Activated CD8-positive, alpha-beta T cell treated with anti-CD3 and anti-CD28 coated beads, Interleukin-2, amount 10 ng/mL, durations not matched to agents 7 days and 5 days (primary cell): ENCODE measurements at regions of chr10 and their contacts with region 1.

Region 1: GRCh38 chr10:17643755-17644484 is at the start of gene STAM:
- DNase-seq: peak; percentile 95
- ATAC-seq: peak; percentile 86
- H3K4me3 Mint-ChIP-seq: peak within 1 kb of the TSS; percentile 95
- H3K27ac Mint-ChIP-seq: peak within 1 kb of the TSS; percentile 100
- H3K4me1 Mint-ChIP-seq: peaks cover 54% of the 10 kb centered on the region
- H3K27me3 Mint-ChIP-seq: no peaks in the 10 kb centered on the region
- total RNA-seq, gene STAM: 20.8 to 21.9 TPM

Region 2: DNA sequence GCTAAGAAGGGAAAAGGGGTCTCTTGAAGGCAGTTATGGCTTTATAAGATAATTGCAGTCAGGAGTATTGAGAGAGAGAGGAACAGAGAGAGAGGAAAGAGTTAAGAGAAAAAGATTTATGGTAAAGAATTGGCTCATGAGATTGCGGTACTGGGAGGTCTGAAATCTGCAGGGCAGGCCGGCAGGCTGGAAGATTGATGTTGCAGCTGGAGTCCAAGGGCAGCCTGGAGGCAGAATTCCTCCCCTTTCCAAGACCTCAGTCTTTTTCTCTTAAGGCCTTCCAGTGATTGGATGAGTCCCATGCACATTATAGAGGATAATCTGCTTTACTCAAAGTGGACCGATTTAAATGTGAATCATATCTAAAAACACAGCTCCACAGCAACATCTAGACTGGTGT is 95.2 kb before region 1 on chr10:
- CTCF ChIA-PET with region 1: no interaction called
- POLR2A ChIA-PET with region 1: no interaction called
- DNase-seq: no peak
- ATAC-seq: no peak
- H3K4me3 Mint-ChIP-seq: no peak overlapping the region
- H3K27ac Mint-ChIP-seq: no peak overlapping the region
- H3K4me1 Mint-ChIP-seq: no peaks in the 10 kb centered on the region
- H3K27me3 Mint-ChIP-seq: peaks cover 2% of the 10 kb centered on the region

Region 3: DNA sequence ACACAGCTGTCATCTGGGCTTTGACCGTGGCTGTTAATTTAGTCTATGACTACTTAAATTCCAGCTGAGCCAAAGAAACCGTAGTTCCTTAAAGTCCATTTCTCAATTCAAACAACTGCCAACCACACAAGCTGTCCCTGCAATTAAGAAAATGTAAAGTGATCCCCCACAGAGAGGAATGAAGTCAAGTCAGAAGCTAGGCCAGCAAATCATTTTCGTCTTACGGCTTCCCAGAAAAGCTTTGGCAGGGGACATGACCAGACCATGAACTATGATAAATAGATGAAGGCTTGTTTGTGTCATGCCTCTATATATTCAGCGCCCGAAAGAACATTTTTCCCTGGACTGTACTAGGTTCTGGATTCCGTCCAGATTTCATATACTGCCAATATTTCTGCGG is 81.3 kb before region 1 on chr10:
- CTCF ChIA-PET with region 1: no interaction called
- POLR2A ChIA-PET with region 1: no interaction called
- DNase-seq: no peak
- ATAC-seq: no peak
- H3K4me3 Mint-ChIP-seq: no peak overlapping the region
- H3K27ac Mint-ChIP-seq: no peak overlapping the region
- H3K4me1 Mint-ChIP-seq: no peaks in the 10 kb centered on the region
- H3K27me3 Mint-ChIP-seq: no peaks in the 10 kb centered on the region

Region 4: GRCh38 chr10:17590928-17591580 is 52.9 kb before region 1 on chr10:
- CTCF ChIA-PET with region 1: no interaction called
- POLR2A ChIA-PET with region 1: no interaction called
- DNase-seq: no peak
- ATAC-seq: no peak
- H3K4me3 Mint-ChIP-seq: no peak overlapping the region
- H3K27ac Mint-ChIP-seq: no peak overlapping the region
- H3K4me1 Mint-ChIP-seq: peaks cover 7% of the 10 kb centered on the region
- H3K27me3 Mint-ChIP-seq: peaks cover 6% of the 10 kb centered on the region

Region 5: GRCh38 chr10:17662193-17663138 is 18.5 kb after region 1 on chr10:
- CTCF ChIA-PET with region 1: interaction called, 11 read pairs
- POLR2A ChIA-PET with region 1: interaction called, 7 read pairs
- DNase-seq: no peak
- ATAC-seq: no peak
- H3K4me3 Mint-ChIP-seq: no peak overlapping the region
- H3K27ac Mint-ChIP-seq: no peak overlapping the region
- H3K4me1 Mint-ChIP-seq: peaks cover 21% of the 10 kb centered on the region
- H3K27me3 Mint-ChIP-seq: no peaks in the 10 kb centered on the region

Region 6: GRCh38 chr10:17685233-17685840 is 41.4 kb after region 1 on chr10:
- CTCF ChIA-PET with region 1: interaction called, 4 read pairs
- POLR2A ChIA-PET with region 1: interaction called, 15 read pairs
- DNase-seq: no peak
- ATAC-seq: no peak
- H3K4me3 Mint-ChIP-seq: no peak overlapping the region
- H3K27ac Mint-ChIP-seq: peak overlapping the region; percentile 74
- H3K4me1 Mint-ChIP-seq: peaks cover 31% of the 10 kb centered on the region
- H3K27me3 Mint-ChIP-seq: no peaks in the 10 kb centered on the region

Region 7: GRCh38 chr10:17737027-17737965 is 93.4 kb after region 1 on chr10:
- CTCF ChIA-PET with region 1: interaction called, 11 read pairs
- POLR2A ChIA-PET with region 1: interaction called, 4 read pairs
- DNase-seq: no peak
- ATAC-seq: no peak
- H3K4me3 Mint-ChIP-seq: no peak overlapping the region
- H3K27ac Mint-ChIP-seq: no peak overlapping the region
- H3K4me1 Mint-ChIP-seq: no peaks in the 10 kb centered on the region
- H3K27me3 Mint-ChIP-seq: no peaks in the 10 kb centered on the region